ENCODE measurements at regions of chr16 and their contacts with region 1.

Region 1: DNA sequence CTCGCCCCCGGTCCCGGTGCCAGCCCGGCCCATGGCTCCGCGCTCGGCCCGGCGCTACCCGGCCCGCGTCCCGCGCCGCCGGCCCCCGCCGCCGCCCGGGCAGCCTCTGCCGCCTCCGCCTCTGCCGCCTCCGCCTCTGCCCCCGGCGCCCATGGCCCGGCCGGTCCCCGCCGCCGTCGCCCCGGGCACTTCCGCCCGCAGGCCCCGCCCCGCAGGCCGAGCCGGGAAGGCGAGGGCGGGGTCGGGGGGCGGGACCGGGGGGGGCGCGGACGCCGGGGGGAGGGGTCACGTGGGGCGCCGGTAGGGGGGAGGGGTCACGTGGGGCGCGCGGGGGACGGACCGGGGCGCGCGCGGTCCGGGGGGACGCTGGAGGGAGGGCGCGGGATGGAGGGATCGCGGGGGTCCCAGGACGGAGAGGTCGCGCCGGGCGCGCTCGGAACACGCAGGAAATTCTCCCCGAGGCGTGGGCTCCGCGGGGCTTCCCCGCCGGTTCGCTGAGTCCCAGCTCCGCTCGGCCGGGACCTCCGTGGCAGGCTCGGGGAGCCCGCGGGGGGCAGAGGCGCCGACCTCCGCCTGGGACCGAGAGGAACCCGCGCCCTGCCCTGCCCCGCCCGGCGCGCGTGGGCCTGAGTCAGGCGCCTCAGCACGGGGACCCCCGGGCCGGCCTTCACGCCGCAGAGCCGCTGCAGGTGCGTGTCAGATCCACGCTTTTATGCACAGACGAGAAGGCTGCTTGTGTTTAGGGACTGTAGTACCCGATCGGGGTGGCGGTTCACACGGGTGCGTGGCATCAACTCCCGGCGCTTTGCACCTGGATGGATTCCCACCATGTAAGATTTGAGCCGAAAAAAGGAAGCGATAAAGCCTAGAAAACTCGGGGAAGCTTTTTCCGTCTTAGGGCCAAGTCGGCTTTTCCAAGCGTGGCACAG is at the start of gene PGAP6:
- DNase-seq: peak; percentile 83
- H3K4me3 ChIP-seq: peak within 1 kb of the TSS; percentile 76 to 99 (median 81)
- H3K27ac ChIP-seq: peak within 1 kb of the TSS; percentile 82 to 89 (median 86)
- H3K4me1 ChIP-seq: peaks cover 3 to 59% (median 41%) of the 10 kb centered on the region in 4 donors
- H3K27me3 ChIP-seq: no peaks in the 10 kb centered on the region
- CTCF ChIP-seq: no peak
- EP300 ChIP-seq: no peak
- POLR2A ChIP-seq: no peak
- total RNA-seq, gene PGAP6: 20.7 to 26.6 (median 22.7) TPM

Region 2: GRCh38 chr16:164827-165538 is 217.1 kb before region 1 on chr16:
- intact Hi-C with region 1: no loop called
- DNase-seq: no peak
- H3K4me3 ChIP-seq: peak overlapping the region in 1 of 4 donors; percentile 2
- H3K27ac ChIP-seq: no peak overlapping the region
- H3K4me1 ChIP-seq: peaks cover 0 to 19% (median 17%) of the 10 kb centered on the region in 4 donors
- H3K27me3 ChIP-seq: peaks cover 32 to 61% (median 54%) of the 10 kb centered on the region in 3 donors
- CTCF ChIP-seq: no peak
- EP300 ChIP-seq: no peak
- POLR2A ChIP-seq: no peak

Region 3: DNA sequence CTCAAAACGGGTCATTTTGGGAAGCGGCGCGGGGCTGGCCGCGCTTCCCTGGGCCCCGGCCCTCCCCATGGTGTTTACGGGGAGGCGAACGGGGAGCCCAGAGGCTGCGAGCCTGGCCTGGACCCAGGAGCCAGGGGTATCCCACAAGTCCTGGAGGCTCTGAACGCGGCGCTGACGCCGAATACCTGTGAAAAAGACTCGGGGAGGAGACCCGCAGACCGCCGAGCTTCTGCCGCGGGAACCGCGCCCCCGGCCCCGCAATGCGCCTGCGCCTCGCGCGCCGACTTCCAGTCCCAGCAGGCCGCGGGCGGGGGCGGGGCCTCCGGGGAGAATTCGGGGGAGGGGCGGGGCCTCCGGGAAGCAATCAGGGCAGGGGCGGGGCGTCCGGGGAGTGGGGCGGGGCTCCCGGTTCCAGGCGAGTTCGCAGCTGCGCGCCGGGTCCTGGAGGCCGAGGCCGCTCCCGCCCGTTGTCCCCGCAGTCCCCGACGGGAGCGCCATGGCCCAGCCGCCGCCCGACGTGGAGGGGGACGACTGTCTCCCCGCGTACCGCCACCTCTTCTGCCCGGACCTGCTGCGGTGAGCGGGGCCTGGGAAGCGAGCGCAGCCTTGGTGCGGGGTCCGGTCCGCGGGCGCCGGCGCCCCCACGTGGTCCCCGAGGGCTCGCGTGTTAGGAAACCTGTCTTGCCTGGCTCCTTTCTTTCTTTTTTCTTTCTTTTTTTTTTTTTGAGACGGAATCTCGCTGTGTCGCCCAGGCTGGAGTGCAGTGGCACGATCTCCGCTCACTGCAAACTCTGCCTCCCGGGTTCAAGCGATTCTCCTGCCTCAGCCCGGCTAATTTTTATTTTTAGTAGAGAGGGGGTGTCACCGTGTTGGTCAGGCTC is 19.7 kb after region 1 on chr16 and contains the start of gene DECR2:
- intact Hi-C with region 1: loop called (anchors 2 kb)
- DNase-seq: peak; percentile 97
- H3K4me3 ChIP-seq: peak within 1 kb of the TSS; percentile 66 to 90 (median 87)
- H3K27ac ChIP-seq: peak within 1 kb of the TSS; percentile 91 to 96 (median 93)
- H3K4me1 ChIP-seq: peaks cover 0 to 42% (median 33%) of the 10 kb centered on the region in 4 donors
- H3K27me3 ChIP-seq: no peaks in the 10 kb centered on the region
- CTCF ChIP-seq: peak; percentile 10 to 56 (median 35)
- EP300 ChIP-seq: no peak
- POLR2A ChIP-seq: peak in 1 of 2 donors; percentile 76
- total RNA-seq, gene DECR2: 15.0 to 21.6 (median 16.4) TPM

Region 4: DNA sequence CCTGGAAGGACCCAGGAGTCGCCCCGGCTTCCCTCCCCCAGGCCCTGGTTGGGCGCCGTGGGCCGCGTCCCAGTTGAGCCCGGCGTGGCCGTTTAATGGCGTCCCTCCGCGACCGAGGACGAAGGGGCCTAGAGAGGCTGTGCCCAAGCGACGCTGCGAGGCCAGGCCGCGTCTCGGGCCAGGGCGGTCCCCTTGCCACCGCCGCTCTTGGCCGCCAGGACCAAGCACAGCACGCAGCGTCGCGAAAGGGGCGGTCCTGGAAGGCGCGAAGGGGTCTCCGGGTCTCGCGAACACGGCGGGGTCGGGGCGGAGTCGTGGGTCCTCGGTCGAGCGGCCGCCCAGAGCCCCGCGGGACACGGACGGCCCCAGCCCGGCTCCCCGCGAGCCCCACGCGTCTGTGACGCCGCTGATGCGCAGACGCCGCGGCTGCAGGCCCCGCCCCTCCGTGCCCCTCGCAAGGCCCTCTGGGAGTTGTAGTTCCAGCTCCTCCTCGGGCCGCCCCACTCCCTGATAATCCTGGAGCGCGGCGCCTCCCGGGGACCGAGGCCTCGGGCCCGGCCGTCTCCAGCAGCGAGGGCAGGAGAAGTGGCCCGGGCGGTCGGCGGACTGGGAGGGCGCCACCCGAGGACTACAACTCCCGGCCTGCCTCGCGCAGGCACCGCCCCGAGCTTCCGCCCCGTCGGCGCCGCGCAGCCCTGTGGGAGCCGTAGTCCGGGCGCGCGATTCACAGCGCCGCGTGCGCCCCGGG is 145.1 kb after region 1 on chr16 and contains the start of gene CAPN15:
- intact Hi-C with region 1: loop called (anchors 5 kb)
- DNase-seq: peak; percentile 94
- H3K4me3 ChIP-seq: peak within 1 kb of the TSS; percentile 57 to 65 (median 62)
- H3K27ac ChIP-seq: peak within 1 kb of the TSS; percentile 86 to 96 (median 94)
- H3K4me1 ChIP-seq: peaks cover 0 to 55% (median 41%) of the 10 kb centered on the region in 4 donors
- H3K27me3 ChIP-seq: no peaks in the 10 kb centered on the region
- CTCF ChIP-seq: peak; percentile 9 to 37 (median 26)
- EP300 ChIP-seq: no peak
- POLR2A ChIP-seq: peak; percentile 48 to 59
- total RNA-seq, gene CAPN15: 10.3 to 24.4 (median 16.9) TPM

Region 5: GRCh38 chr16:667780-668518 is 285.9 kb after region 1 on chr16 and contains the start of gene RHOT2:
- intact Hi-C with region 1: loop called (anchors 10 kb)
- DNase-seq: peak; percentile 96
- H3K4me3 ChIP-seq: peak within 1 kb of the TSS; percentile 62 to 99 (median 86)
- H3K27ac ChIP-seq: peak within 1 kb of the TSS; percentile 82 to 94 (median 86)
- H3K4me1 ChIP-seq: peaks cover 0 to 28% (median 22%) of the 10 kb centered on the region in 4 donors
- H3K27me3 ChIP-seq: no peaks in the 10 kb centered on the region
- CTCF ChIP-seq: peak; percentile 13 to 88 (median 38)
- EP300 ChIP-seq: no peak
- POLR2A ChIP-seq: peak in 1 of 2 donors; percentile 48
- total RNA-seq, gene RHOT2: 35.3 to 58.8 (median 48.8) TPM

Measured in sigmoid colon (tissue), 7 donors.